Activated B cell treated with CpG ODN at 0.5 μM for 24 hours (primary cell): ENCODE measurements at regions of chr11 and their contacts with region 1.

Region 1: GRCh38 chr11:59753650-59754493 is 1.3 kb upstream of the STX3 start:
- DNase-seq: peak; percentile 73
- ATAC-seq: peak; percentile 66
- H3K4me3 Mint-ChIP-seq: peak overlapping the region; percentile 90
- H3K27ac Mint-ChIP-seq: peak overlapping the region; percentile 62
- H3K4me1 Mint-ChIP-seq: peaks cover 28% of the 10 kb centered on the region
- H3K27me3 Mint-ChIP-seq: peaks cover 9% of the 10 kb centered on the region
- CTCF ChIP-seq: peak; percentile 79

Region 2: GRCh38 chr11:59283825-59284772 is 469.8 kb before region 1 on chr11:
- CTCF ChIA-PET with region 1: no interaction called
- POLR2A ChIA-PET with region 1: no interaction called
- intact Hi-C with region 1: loop called (anchors 10 kb)
- DNase-seq: peak; percentile 55
- ATAC-seq: peak; percentile 73
- H3K4me3 Mint-ChIP-seq: peak overlapping the region; percentile 70
- H3K27ac Mint-ChIP-seq: peak overlapping the region; percentile 87
- H3K4me1 Mint-ChIP-seq: peaks cover 57% of the 10 kb centered on the region
- H3K27me3 Mint-ChIP-seq: no peaks in the 10 kb centered on the region
- CTCF ChIP-seq: peak; percentile 59

Region 3: GRCh38 chr11:59641156-59641555 is 112.7 kb before region 1 on chr11:
- CTCF ChIA-PET with region 1: no interaction called
- POLR2A ChIA-PET with region 1: no interaction called
- intact Hi-C with region 1: no loop called
- DNase-seq: no peak
- ATAC-seq: no peak
- H3K4me3 Mint-ChIP-seq: no peak overlapping the region
- H3K27ac Mint-ChIP-seq: no peak overlapping the region
- H3K4me1 Mint-ChIP-seq: no peaks in the 10 kb centered on the region
- H3K27me3 Mint-ChIP-seq: no peaks in the 10 kb centered on the region
- CTCF ChIP-seq: no peak

Region 4: GRCh38 chr11:59668950-59669610 is 84.8 kb before region 1 on chr11 and contains the start of gene PATL1:
- CTCF ChIA-PET with region 1: no interaction called
- POLR2A ChIA-PET with region 1: interaction called, 8 read pairs
- intact Hi-C with region 1: loop called (anchors 1 kb)
- DNase-seq: peak; percentile 95
- ATAC-seq: peak; percentile 88
- H3K4me3 Mint-ChIP-seq: peak within 1 kb of the TSS; percentile 93
- H3K27ac Mint-ChIP-seq: peak within 1 kb of the TSS; percentile 97
- H3K4me1 Mint-ChIP-seq: peaks cover 27% of the 10 kb centered on the region
- H3K27me3 Mint-ChIP-seq: no peaks in the 10 kb centered on the region
- CTCF ChIP-seq: no peak
- total RNA-seq, gene PATL1: 42.0 and 45.1 TPM in 2 replicates

Region 5: DNA sequence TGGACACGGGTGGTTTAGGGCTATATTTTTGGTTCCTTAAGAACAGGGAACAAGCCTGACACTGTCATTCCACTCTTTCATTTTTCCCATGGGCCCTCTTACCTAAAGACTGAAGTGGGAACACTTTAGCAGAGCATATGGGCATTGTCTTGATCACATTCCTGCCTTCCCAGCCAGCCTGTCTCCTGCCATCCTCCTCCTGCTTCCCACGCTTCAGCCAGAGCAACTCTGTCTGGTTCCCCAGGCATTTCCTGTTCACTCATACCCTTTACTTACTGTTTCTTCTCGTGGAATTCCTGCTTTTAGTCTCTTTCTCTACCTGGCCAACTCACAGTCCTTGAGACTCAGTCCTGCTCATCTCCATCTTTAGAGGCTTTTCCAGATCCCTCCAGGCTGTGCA is 33.9 kb after region 1 on chr11:
- CTCF ChIA-PET with region 1: no interaction called
- POLR2A ChIA-PET with region 1: no interaction called
- intact Hi-C with region 1: no loop called
- DNase-seq: no peak
- ATAC-seq: no peak
- H3K4me3 Mint-ChIP-seq: no peak overlapping the region
- H3K27ac Mint-ChIP-seq: no peak overlapping the region
- H3K4me1 Mint-ChIP-seq: peaks cover 4% of the 10 kb centered on the region
- H3K27me3 Mint-ChIP-seq: no peaks in the 10 kb centered on the region
- CTCF ChIP-seq: no peak

Region 6: GRCh38 chr11:59802639-59803176 is 48.8 kb after region 1 on chr11:
- CTCF ChIA-PET with region 1: interaction called, 112 read pairs
- POLR2A ChIA-PET with region 1: interaction called, 13 read pairs
- intact Hi-C with region 1: loop called (anchors 1 kb)
- DNase-seq: no peak
- ATAC-seq: peak; percentile 69
- H3K4me3 Mint-ChIP-seq: no peak overlapping the region
- H3K27ac Mint-ChIP-seq: no peak overlapping the region
- H3K4me1 Mint-ChIP-seq: no peaks in the 10 kb centered on the region
- H3K27me3 Mint-ChIP-seq: no peaks in the 10 kb centered on the region
- CTCF ChIP-seq: no peak

Region 7: DNA sequence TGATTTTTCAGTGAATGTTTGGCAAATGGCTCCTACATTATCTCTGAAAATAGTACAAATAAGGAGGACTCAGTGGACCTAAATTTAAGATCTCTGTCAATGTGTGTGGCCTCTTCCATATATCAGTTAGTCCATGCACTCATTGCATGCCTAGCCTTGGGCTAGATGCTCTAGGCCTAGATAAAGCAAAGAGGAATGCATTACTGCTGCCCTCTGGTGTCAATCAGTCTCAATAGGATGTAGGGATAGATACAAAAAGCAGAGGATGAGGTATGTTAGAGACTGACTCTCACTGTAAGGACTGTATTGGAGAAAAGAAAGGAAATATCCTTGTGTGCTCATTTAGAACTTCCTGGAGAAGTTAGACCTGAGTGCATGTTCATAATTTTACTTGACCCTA is 376.6 kb after region 1 on chr11:
- CTCF ChIA-PET with region 1: interaction called, 3 read pairs
- POLR2A ChIA-PET with region 1: no interaction called
- intact Hi-C with region 1: loop called (anchors 1 kb)
- DNase-seq: no peak
- ATAC-seq: peak; percentile 47
- H3K4me3 Mint-ChIP-seq: no peak overlapping the region
- H3K27ac Mint-ChIP-seq: no peak overlapping the region
- H3K4me1 Mint-ChIP-seq: peaks cover 9% of the 10 kb centered on the region
- H3K27me3 Mint-ChIP-seq: peaks cover 3% of the 10 kb centered on the region
- CTCF ChIP-seq: no peak

Region 8: DNA sequence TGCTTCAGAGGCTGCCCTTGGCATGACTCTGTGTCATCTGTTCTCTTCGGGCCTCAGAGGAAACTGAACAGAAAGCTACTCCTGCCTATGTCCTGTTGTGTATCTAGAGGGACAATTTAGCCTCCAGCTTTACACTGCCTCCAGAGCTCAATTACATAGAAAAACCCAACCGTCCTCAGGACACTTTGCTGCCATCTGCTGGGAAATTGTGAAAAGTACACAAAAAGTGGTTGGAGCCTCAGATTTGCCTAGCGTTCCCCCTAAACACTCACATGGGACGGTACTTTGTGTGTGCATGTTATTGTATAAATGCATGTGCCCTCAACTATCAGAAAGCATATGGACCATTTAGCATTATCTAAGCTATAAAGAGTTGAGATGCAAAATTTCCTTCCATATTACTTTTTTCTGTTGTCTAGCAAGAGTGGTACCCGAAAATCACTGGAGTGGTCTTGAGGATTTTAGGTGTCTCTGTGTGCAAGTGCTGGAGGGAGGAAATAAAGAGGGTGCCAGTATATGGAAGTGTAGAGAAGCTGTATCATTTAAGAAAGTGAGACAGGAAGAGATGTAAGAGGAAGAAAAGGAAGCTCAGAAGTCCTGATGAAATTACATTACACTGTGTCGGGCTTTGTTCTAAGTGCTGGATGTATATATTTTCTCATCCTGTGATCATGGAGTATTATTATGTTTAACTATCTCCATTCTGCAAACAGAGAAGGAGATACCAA is 497.8 kb after region 1 on chr11:
- CTCF ChIA-PET with region 1: no interaction called
- POLR2A ChIA-PET with region 1: no interaction called
- intact Hi-C with region 1: loop called (anchors 2 kb)
- DNase-seq: no peak
- ATAC-seq: no peak
- H3K4me3 Mint-ChIP-seq: no peak overlapping the region
- H3K27ac Mint-ChIP-seq: no peak overlapping the region
- H3K4me1 Mint-ChIP-seq: peaks cover 3% of the 10 kb centered on the region
- H3K27me3 Mint-ChIP-seq: peaks cover 6% of the 10 kb centered on the region
- CTCF ChIP-seq: no peak